Activated CD8-positive, alpha-beta T cell treated with anti-CD3 and anti-CD28 coated beads for 36 hours (primary cell): ENCODE measurements at regions of chr4 and their contacts with region 1.

Region 1: DNA sequence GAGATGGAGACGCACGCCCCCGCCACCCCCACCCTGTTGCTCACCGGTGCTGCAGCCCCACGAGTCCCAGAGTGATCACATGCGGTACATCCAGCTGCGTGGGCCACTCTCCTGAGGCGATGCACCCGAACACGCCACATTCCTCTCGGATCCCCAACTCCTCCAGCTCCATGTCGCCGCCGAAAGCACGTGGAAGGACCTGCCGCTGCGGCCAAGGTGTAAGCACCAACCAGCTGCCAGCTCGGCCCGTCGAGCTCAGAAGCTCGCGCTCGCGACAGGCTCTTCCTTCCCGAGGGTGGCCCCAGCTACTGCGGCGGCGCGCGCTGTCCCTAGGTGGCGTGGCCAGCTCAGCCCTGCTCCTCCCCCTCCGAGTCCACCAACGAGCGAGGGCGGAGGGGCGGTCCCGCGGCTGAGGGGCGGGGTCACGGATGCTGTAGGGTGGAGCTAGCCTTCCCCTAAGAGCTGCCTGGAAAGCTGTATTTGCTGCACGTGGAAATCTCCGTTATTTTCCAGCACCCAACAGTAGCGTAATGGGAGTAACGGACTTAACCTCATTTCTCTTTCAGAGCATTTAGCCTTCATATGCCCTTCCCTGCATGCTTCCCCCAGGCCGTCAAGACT is at the start of gene PPAT:
- DNase-seq: peak; percentile 98
- ATAC-seq: peak; percentile 86
- H3K4me3 Mint-ChIP-seq: peak within 1 kb of the TSS; percentile 89
- H3K27ac Mint-ChIP-seq: peak within 1 kb of the TSS; percentile 95
- H3K4me1 Mint-ChIP-seq: peaks cover 48% of the 10 kb centered on the region
- H3K27me3 Mint-ChIP-seq: no peaks in the 10 kb centered on the region
- CTCF ChIP-seq: no peak
- total RNA-seq, gene PPAT: 44.1 to 46.9 TPM

Region 2: DNA sequence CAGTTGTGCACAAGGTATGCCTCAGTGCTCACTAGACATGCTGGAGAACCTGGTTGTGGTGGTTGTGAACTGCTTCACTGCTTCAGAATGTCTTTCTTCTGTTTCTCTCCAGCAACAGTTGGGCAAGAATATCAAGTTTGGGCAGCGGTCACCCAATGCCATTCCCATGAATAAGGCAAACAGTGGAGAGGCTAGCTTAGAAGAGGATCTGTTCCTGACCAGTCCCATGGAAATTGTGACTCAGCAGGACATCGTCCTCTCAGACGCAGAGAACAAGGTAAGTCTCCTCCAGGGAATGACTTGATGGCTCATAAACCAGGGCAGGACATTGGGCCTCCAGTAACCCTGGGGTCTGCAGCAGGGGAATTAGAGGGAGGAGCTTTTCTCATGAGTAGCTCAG is 128.0 kb before region 1 on chr4:
- CTCF ChIA-PET with region 1: no interaction called
- POLR2A ChIA-PET with region 1: no interaction called
- intact Hi-C with region 1: no loop called
- DNase-seq: no peak
- ATAC-seq: no peak
- H3K4me3 Mint-ChIP-seq: no peak overlapping the region
- H3K27ac Mint-ChIP-seq: no peak overlapping the region
- H3K4me1 Mint-ChIP-seq: no peaks in the 10 kb centered on the region
- H3K27me3 Mint-ChIP-seq: no peaks in the 10 kb centered on the region
- CTCF ChIP-seq: no peak

Region 3: DNA sequence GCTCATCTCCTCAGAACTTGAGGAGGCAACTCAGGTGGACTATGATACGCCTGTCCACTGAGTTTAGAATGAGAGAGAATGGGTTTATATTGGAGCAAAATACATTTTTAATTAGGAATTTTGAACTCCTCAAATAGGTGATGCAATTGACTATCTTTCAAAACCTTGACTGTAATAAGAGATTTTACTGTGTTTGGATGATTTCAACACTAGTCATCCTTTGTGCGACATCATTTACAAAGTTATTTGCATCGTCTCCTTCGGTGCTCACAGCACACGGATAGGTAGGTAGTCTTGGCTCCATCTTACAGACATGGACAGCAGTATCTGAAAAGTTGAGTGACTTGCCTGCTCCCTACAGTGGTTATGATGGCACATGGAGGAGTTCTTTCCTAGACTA is 115.1 kb before region 1 on chr4:
- CTCF ChIA-PET with region 1: no interaction called
- POLR2A ChIA-PET with region 1: no interaction called
- intact Hi-C with region 1: no loop called
- DNase-seq: no peak
- ATAC-seq: no peak
- H3K4me3 Mint-ChIP-seq: no peak overlapping the region
- H3K27ac Mint-ChIP-seq: no peak overlapping the region
- H3K4me1 Mint-ChIP-seq: no peaks in the 10 kb centered on the region
- H3K27me3 Mint-ChIP-seq: no peaks in the 10 kb centered on the region
- CTCF ChIP-seq: no peak

Region 4: DNA sequence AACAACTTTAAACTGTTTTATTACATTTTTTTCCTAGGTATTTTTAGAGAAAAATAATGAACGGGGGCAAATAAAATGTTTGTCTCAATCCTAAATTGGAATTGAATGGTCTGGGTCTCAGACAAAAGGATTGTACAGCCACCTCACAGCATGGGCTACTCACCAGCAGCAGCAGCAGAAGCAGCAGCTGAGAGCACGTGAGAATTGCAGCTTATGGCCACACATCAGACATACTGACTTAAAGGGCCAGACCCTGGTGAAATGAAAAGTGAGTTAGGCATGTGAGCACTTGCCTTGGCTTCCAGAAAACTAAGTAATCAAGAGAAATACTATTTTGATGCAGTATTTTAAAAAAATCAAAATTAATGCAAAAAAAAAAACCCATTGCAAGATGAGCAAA is 104.7 kb before region 1 on chr4:
- CTCF ChIA-PET with region 1: no interaction called
- POLR2A ChIA-PET with region 1: no interaction called
- intact Hi-C with region 1: no loop called
- DNase-seq: no peak
- ATAC-seq: no peak
- H3K4me3 Mint-ChIP-seq: no peak overlapping the region
- H3K27ac Mint-ChIP-seq: no peak overlapping the region
- H3K4me1 Mint-ChIP-seq: no peaks in the 10 kb centered on the region
- H3K27me3 Mint-ChIP-seq: no peaks in the 10 kb centered on the region
- CTCF ChIP-seq: no peak

Region 5: DNA sequence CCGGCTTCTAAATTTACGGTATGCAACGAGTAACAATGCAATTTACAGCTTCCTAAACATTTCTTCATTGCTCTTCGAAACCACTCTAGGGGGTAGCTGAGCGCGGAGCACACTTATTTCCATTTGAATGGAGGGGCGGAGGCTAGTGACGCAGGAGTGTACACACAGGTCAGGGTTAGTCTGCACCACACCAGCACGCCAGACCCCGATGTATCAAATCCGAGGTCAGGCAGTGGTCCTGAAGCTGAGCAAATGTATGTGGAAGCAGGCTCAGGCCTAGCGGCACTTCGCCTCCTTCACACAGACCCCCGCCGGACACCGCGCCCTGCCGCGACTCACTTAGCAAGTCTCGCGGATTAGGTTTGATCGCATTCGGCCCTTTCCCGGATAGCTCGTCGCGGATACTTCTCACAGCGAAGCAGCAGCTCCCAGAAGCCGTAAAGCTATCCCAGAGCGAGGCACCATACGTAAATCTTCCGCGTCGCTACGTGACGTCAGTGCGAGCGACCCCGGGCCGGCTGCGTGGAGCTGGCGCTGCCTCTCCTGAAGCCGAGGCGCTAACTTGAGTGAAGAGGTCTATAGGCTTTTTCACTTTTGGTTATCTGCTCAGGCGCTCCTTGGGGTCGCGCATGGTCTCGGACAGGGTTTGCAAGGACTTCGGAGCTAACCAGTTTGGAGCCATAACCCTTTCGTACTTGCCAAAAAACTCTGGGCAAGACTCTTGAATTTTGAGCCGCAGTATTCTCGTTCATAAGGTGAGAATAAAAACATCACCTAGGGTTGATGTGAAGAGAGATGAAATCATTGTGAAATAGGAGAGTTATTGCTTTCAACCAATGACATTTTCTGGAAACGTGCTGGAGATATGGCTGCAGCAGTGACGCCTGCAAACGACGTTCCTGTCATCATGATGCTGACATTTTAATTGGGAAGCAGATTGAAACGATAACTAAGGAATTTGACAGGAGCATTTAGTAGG is 48.1 kb before region 1 on chr4 and contains the start of gene AASDH:
- CTCF ChIA-PET with region 1: interaction called, 10 read pairs
- POLR2A ChIA-PET with region 1: interaction called, 51 read pairs
- intact Hi-C with region 1: loop called (anchors 5 kb)
- DNase-seq: peak; percentile 97
- ATAC-seq: peak; percentile 92
- H3K4me3 Mint-ChIP-seq: peak within 1 kb of the TSS; percentile 93
- H3K27ac Mint-ChIP-seq: peak within 1 kb of the TSS; percentile 99
- H3K4me1 Mint-ChIP-seq: peaks cover 39% of the 10 kb centered on the region
- H3K27me3 Mint-ChIP-seq: no peaks in the 10 kb centered on the region
- CTCF ChIP-seq: no peak
- total RNA-seq, gene AASDH: 14.5 to 14.7 TPM

Region 6: GRCh38 chr4:56424697-56425514 is 10.5 kb before region 1 on chr4:
- CTCF ChIA-PET with region 1: interaction called, 40 read pairs
- POLR2A ChIA-PET with region 1: interaction called, 11 read pairs
- intact Hi-C with region 1: no loop called
- DNase-seq: peak; percentile 62
- ATAC-seq: no peak
- H3K4me3 Mint-ChIP-seq: no peak overlapping the region
- H3K27ac Mint-ChIP-seq: no peak overlapping the region
- H3K4me1 Mint-ChIP-seq: peaks cover 31% of the 10 kb centered on the region
- H3K27me3 Mint-ChIP-seq: no peaks in the 10 kb centered on the region
- CTCF ChIP-seq: peak; percentile 72

Region 7: GRCh38 chr4:56460085-56460484 is 24.7 kb after region 1 on chr4:
- CTCF ChIA-PET with region 1: interaction called, 3 read pairs
- POLR2A ChIA-PET with region 1: interaction called, 30 read pairs
- intact Hi-C with region 1: no loop called
- DNase-seq: no peak
- ATAC-seq: no peak
- H3K4me3 Mint-ChIP-seq: no peak overlapping the region
- H3K27ac Mint-ChIP-seq: peak overlapping the region; percentile 85
- H3K4me1 Mint-ChIP-seq: peaks cover 37% of the 10 kb centered on the region
- H3K27me3 Mint-ChIP-seq: no peaks in the 10 kb centered on the region
- CTCF ChIP-seq: no peak

Region 8: DNA sequence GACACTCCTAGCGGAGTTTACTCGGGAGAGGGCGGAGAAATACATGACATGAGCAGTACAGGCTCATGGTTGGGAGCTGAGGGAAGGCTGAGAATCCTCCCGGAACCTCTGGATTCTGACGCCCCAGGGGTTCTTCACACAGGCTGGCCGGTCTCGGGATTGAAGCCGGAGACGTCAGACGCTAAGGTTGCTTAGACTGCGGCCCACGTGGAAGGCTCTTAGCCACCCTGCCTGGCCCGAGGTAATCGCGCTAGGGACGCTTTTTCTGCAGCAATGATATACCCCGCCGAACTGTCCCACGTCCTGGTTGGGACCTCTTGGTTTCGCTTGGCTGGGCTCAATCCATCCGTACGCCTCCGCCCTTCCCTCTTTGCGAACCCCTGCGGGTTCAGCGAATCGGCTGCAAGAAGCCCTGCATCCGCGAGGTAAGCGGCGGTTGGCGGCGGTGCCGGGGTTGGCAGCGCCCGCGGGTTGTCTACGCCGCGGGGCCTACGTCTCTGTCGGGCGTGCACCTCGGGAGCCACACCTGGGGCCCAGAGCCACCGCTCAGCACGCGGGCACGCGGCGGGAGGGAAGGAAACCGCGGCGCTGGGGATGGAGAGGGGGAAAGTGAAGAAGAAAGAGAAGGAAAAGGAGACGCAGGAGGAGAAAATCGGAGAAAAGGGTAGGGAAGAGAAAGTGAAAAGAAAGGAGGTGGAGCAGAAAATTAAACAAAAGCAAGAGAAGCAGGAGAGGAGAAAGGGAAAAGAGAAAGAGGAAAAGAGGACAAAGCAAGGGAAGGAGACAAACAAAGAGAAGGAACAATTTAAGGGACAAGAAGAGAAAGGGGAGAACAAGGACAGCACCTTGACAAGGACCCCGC is 70.1 kb after region 1 on chr4 and contains the start of gene ARL9:
- CTCF ChIA-PET with region 1: no interaction called
- POLR2A ChIA-PET with region 1: no interaction called
- intact Hi-C with region 1: no loop called
- DNase-seq: peak; percentile 65
- ATAC-seq: peak; percentile 87
- H3K4me3 Mint-ChIP-seq: peak within 1 kb of the TSS; percentile 71
- H3K27ac Mint-ChIP-seq: peak within 1 kb of the TSS; percentile 40
- H3K4me1 Mint-ChIP-seq: peaks cover 18% of the 10 kb centered on the region
- H3K27me3 Mint-ChIP-seq: peaks cover 8% of the 10 kb centered on the region
- CTCF ChIP-seq: no peak
- total RNA-seq, gene ARL9: 0.16 to 0.25 TPM

Region 9: DNA sequence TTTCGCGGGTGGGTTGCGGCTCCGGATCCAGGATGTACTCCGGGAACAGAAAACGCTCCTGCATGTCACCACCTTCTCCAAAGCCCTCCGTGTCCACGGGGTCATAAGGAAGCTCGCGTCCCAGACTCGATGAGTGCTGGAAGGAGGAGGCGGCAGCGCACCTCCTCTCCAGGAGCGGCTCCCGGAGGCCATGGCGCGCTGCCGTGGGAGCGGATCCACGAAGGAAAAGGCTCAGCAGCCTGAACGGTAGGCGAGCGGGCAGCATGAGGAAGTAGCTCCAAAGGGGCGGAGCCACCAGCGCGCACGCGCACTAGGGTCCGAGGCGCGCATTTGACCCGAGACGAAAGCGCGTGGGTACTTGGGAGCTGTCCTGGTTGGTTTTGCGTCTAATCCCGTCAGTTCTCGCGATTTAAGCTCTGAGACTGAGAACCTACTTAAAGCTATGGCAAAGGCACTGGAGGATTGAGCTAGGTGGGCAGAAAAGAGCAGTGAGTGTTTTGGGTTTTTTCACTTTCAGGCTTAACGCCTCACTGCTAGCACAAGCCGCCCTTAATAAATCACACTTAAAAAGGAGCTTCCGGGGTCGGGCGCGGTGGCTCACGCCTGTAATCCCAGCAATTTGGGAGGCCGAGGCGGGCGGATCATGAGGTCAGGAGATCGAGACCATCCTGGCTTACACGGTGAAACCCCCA is 542.1 kb after region 1 on chr4 and contains the start of gene NOA1:
- CTCF ChIA-PET with region 1: no interaction called
- POLR2A ChIA-PET with region 1: interaction called, 21 read pairs
- intact Hi-C with region 1: no loop called
- DNase-seq: peak; percentile 98
- ATAC-seq: peak; percentile 84
- H3K4me3 Mint-ChIP-seq: peak within 1 kb of the TSS; percentile 96
- H3K27ac Mint-ChIP-seq: peak within 1 kb of the TSS; percentile 99
- H3K4me1 Mint-ChIP-seq: peaks cover 45% of the 10 kb centered on the region
- H3K27me3 Mint-ChIP-seq: no peaks in the 10 kb centered on the region
- CTCF ChIP-seq: no peak
- total RNA-seq, gene NOA1: 32.1 to 32.4 TPM